Endothelial cell of umbilical vein (primary cell): ENCODE measurements at regions of chr7 and their contacts with region 1.

Region 1: DNA sequence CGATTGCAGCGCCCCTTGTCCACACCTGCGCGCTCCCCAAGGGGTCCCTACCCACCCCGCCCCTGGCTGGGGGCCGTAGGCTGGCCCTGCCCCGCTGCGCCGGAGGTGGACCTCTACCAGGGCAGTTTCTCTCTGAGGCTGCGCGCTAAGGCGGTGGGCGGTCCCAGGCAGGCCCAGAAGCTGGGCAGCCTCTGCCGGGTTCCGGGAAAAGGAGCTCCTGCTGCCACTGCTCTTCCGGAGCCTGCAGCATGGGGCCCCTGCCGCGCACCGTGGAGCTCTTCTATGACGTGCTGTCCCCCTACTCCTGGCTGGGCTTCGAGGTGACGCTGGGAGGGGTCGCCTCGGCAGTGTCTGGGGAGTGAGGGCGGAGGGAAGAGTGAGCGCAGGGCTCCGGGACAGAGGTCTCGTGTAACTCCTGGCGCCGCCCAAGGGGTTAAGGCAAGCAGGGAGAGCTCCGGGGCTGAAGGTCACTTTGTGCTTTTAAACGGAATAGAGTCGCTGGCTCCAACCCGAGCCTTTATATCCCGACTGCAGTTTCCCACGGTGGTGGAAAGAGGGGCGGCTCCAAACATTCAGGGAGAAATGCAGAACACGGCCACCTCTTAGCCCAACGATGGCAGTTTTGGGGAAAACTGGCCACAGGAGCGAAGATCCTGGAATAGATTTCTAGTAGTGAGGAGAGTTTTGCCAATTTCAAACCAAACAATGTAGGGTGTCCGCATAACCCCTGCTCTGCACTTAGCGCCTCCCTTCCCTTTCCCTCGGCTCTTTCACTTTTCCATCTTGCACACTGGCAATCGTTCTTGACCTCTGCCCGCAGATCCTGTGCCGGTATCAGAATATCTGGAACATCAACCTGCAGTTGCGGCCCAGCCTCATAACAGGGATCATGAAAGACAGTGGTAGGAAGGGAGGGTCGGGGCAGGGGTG is at the start of gene GSTK1:
- DNase-seq: peak; percentile 76
- H3K4me3 ChIP-seq: peak within 1 kb of the TSS; percentile 45 to 87 (median 80)
- H3K27ac ChIP-seq: peak within 1 kb of the TSS; percentile 52
- H3K4me1 ChIP-seq: peaks cover 8% of the 10 kb centered on the region
- H3K27me3 ChIP-seq: no peaks in the 10 kb centered on the region
- CTCF ChIP-seq: no peak
- POLR2A ChIP-seq: peak; percentile 93
- total RNA-seq, gene GSTK1: 99.4 and 119 TPM in 2 replicates

Region 2: GRCh38 chr7:142001163-142001874 is 1262.2 kb before region 1 on chr7:
- CTCF ChIA-PET with region 1: no interaction called
- POLR2A ChIA-PET with region 1: no interaction called
- dilution Hi-C with region 1: no loop called
- intact Hi-C with region 1: no loop called
- DNase-seq: no peak
- H3K4me3 ChIP-seq: no peak overlapping the region
- H3K27ac ChIP-seq: no peak overlapping the region
- H3K4me1 ChIP-seq: no peaks in the 10 kb centered on the region
- H3K27me3 ChIP-seq: no peaks in the 10 kb centered on the region
- CTCF ChIP-seq: no peak
- POLR2A ChIP-seq: no peak

Region 3: DNA sequence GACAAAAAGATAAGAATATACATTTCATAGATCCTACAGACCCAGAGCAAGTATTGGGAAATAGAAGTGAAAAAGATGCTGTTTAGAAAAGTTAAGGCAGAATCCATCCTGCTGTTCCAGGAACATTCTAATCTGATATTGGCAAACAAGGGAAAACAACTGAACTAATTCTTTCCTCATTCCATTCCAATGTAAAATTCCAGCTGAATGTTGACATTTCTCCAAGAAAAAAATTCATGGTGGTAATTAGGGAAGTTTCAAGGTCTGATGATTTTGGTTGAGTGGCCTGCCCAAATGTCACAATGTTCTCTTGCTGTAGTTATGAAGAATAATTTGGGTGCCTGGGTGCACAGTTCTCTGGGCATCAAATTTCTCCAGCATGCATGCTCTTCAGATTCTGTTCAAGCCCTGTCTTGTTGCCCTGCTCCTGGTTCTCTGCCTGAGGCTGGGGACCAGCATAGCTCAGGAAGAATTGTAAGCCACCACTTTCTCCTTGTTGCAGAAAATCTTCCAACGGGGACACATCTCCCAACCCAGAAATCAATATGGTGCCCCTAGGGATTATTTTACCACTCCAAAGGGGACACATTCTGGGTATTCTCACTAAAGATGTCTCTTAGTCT is 116.3 kb before region 1 on chr7:
- CTCF ChIA-PET with region 1: no interaction called
- POLR2A ChIA-PET with region 1: no interaction called
- dilution Hi-C with region 1: no loop called
- intact Hi-C with region 1: no loop called
- DNase-seq: no peak
- H3K4me3 ChIP-seq: no peak overlapping the region
- H3K27ac ChIP-seq: no peak overlapping the region
- H3K4me1 ChIP-seq: no peaks in the 10 kb centered on the region
- H3K27me3 ChIP-seq: no peaks in the 10 kb centered on the region
- CTCF ChIP-seq: no peak
- POLR2A ChIP-seq: no peak

Region 4: GRCh38 chr7:143279186-143280098 is 15.9 kb after region 1 on chr7:
- CTCF ChIA-PET with region 1: interaction called, 6 read pairs
- POLR2A ChIA-PET with region 1: interaction called, 3 read pairs
- dilution Hi-C with region 1: no loop called
- intact Hi-C with region 1: loop called (anchors 1 kb)
- DNase-seq: peak; percentile 83
- H3K4me3 ChIP-seq: no peak overlapping the region
- H3K27ac ChIP-seq: peak overlapping the region; percentile 34
- H3K4me1 ChIP-seq: peaks cover 7% of the 10 kb centered on the region
- H3K27me3 ChIP-seq: no peaks in the 10 kb centered on the region
- CTCF ChIP-seq: no peak
- POLR2A ChIP-seq: no peak

Region 5: GRCh38 chr7:143299840-143300239 is 36.3 kb after region 1 on chr7:
- CTCF ChIA-PET with region 1: interaction called, 8 read pairs
- POLR2A ChIA-PET with region 1: no interaction called
- dilution Hi-C with region 1: no loop called
- intact Hi-C with region 1: loop called (anchors 2 kb)
- DNase-seq: peak; percentile 29
- H3K4me3 ChIP-seq: no peak overlapping the region
- H3K27ac ChIP-seq: no peak overlapping the region
- H3K4me1 ChIP-seq: peaks cover 23% of the 10 kb centered on the region
- H3K27me3 ChIP-seq: no peaks in the 10 kb centered on the region
- CTCF ChIP-seq: peak; percentile 54 to 69
- POLR2A ChIP-seq: no peak